ENCODE measurements at regions of chr4 and their contacts with region 1.

Region 1: GRCh38 chr4:94519925-94520789 is 68.4 kb downstream of the PDLIM5 start:
- DNase-seq: no peak
- H3K4me3 ChIP-seq: no peak overlapping the region
- H3K27ac ChIP-seq: peak overlapping the region in 1 of 4 donors; percentile 72
- H3K4me1 ChIP-seq: peaks cover 11 to 71% (median 23%) of the 10 kb centered on the region in 4 donors
- H3K27me3 ChIP-seq: no peaks in the 10 kb centered on the region
- CTCF ChIP-seq: no peak
- EP300 ChIP-seq: no peak
- POLR2A ChIP-seq: no peak

Region 2: GRCh38 chr4:94451695-94452475 is 68.3 kb before region 1 on chr4 and contains the start of gene PDLIM5:
- in situ Hi-C with region 1: no loop called
- intact Hi-C with region 1: loop called (anchors 5 kb)
- DNase-seq: peak; percentile 93
- H3K4me3 ChIP-seq: peak within 1 kb of the TSS; percentile 84 to 100 (median 94)
- H3K27ac ChIP-seq: peak within 1 kb of the TSS; percentile 97 to 100 (median 99)
- H3K4me1 ChIP-seq: peaks cover 9 to 55% (median 24%) of the 10 kb centered on the region in 4 donors
- H3K27me3 ChIP-seq: no peaks in the 10 kb centered on the region
- CTCF ChIP-seq: no peak
- EP300 ChIP-seq: no peak
- POLR2A ChIP-seq: peak; percentile 99
- total RNA-seq, gene PDLIM5: 62.9 to 133 (median 110) TPM

Region 3: DNA sequence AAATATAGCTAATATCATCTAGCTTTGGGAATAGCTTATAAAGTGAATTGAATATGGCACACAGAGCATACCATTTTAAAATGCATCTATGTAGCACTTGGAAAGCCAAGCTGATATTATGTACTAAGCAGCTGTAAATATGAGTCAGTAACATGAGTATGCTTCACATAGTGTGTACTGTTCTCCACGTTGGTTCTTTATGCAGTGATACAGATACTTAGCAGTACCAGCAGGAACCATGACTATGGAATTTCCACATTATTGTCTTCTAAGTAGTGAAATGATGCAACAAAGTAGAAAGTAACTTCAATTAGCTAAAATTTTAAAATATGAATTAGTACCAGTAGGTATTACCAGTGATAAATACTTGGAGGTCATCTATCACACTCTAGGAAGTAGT is 557.7 kb after region 1 on chr4:
- in situ Hi-C with region 1: no loop called
- intact Hi-C with region 1: no loop called
- DNase-seq: no peak
- H3K4me3 ChIP-seq: no peak overlapping the region
- H3K27ac ChIP-seq: no peak overlapping the region
- H3K4me1 ChIP-seq: peaks cover 0 to 9% (median 0%) of the 10 kb centered on the region in 4 donors
- H3K27me3 ChIP-seq: no peaks in the 10 kb centered on the region
- CTCF ChIP-seq: no peak
- EP300 ChIP-seq: no peak
- POLR2A ChIP-seq: no peak